B cell (primary cell): ENCODE measurements at regions of chr5 and their contacts with region 1.

Region 1: DNA sequence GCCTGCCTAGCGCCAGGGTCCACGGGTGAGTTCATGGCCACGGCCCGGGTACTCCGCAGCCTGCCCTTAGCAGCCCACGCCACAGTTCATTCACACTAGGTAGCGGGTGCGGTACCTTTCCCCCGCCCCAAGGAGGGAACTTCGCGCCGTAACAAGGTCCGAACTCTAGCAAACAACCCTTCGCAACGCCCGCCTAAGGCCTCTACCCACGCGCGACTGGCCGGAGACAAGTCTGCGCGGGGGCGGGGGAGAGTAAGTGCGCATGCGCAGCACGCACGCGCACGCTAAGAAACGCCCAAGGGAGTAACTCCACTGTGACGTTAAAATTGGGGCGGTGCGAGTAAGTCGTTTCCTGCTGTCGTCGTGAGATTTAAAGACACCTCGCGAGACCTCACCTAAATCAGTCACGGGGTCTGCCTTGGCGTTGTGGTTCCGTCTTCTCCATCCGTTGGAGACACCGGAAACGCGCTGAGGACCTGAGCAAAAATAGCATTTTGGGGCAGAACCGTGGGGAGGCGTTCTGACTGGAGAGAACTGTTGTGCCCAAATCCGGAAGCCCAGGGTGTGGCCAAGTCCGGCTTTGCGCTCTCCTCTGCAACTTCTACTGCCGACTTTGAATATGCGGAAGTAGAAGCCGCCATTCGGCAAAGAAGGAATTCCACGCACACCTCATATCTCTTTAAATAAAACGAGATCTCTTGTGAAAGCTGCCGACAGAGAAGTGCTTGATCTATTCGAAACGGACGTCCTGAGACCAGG is at the start of gene RAPGEF6:
- DNase-seq: peak; percentile 100
- ATAC-seq: peak; percentile 83
- H3K4me3 ChIP-seq: peak within 1 kb of the TSS; percentile 77 to 91 (median 86)
- H3K4me3 Mint-ChIP-seq: peak within 1 kb of the TSS; percentile 95
- H3K27ac ChIP-seq: peak within 1 kb of the TSS; percentile 91 to 99
- H3K27ac Mint-ChIP-seq: peak within 1 kb of the TSS; percentile 99
- H3K4me1 ChIP-seq: peaks cover 41 to 46% of the 10 kb centered on the region in 2 donors
- H3K4me1 Mint-ChIP-seq: peaks cover 40% of the 10 kb centered on the region
- H3K27me3 ChIP-seq: no peaks in the 10 kb centered on the region
- H3K27me3 Mint-ChIP-seq: no peaks in the 10 kb centered on the region
- CTCF ChIP-seq: no peak
- total RNA-seq, gene RAPGEF6: 48.7 and 56.2 TPM in 2 replicates

Region 2: GRCh38 chr5:131165119-131165727 is 470.0 kb before region 1 on chr5 and contains the start of gene HINT1:
- CTCF ChIA-PET with region 1: no interaction called
- POLR2A ChIA-PET with region 1: no interaction called
- intact Hi-C with region 1: loop called (anchors 10 kb)
- DNase-seq: peak; percentile 96
- ATAC-seq: peak; percentile 80
- H3K4me3 ChIP-seq: peak within 1 kb of the TSS; percentile 69 to 96 (median 94)
- H3K4me3 Mint-ChIP-seq: peak within 1 kb of the TSS; percentile 90
- H3K27ac ChIP-seq: peak within 1 kb of the TSS; percentile 82 to 92
- H3K27ac Mint-ChIP-seq: peak within 1 kb of the TSS; percentile 98
- H3K4me1 ChIP-seq: peaks cover 20 to 23% of the 10 kb centered on the region in 2 donors
- H3K4me1 Mint-ChIP-seq: peaks cover 41% of the 10 kb centered on the region
- H3K27me3 ChIP-seq: no peaks in the 10 kb centered on the region
- H3K27me3 Mint-ChIP-seq: no peaks in the 10 kb centered on the region
- CTCF ChIP-seq: no peak
- total RNA-seq, gene HINT1: 180 and 206 TPM in 2 replicates

Region 3: DNA sequence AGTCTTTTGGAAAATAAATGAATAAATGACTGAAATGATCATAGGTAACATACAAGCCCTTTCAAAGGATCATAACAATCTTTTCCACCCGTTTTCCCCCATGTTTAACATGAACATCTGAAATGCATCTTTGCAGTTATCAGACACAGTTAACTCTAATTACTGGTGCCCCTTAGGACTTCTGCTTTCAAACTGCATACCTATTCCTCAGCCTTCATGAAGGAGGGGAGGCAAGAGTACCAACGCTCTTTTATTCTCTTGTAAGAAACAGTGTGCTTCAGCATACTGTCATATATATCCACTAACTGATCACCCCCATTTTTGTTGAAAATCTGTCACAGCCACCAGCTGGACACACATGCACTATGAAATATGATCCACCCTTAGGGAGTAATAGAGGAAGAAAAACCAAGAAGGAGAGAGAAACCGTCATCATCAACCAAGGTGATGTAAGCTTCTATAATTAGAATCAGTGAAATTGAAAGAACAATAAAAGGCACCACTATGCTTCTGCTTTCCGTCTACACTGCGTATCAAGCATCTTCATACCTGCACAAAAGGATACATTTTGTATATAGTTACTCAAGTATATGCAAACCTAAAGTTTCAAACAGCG is 98.9 kb before region 1 on chr5:
- CTCF ChIA-PET with region 1: no interaction called
- POLR2A ChIA-PET with region 1: no interaction called
- intact Hi-C with region 1: loop called (anchors 1 kb)
- DNase-seq: peak; percentile 92
- ATAC-seq: peak; percentile 88
- H3K4me3 ChIP-seq: peak overlapping the region in 3 of 5 experiments; percentile 27 to 35 (median 35)
- H3K4me3 Mint-ChIP-seq: peak overlapping the region; percentile 60
- H3K27ac ChIP-seq: peak overlapping the region; percentile 82 to 96
- H3K27ac Mint-ChIP-seq: peak overlapping the region; percentile 87
- H3K4me1 ChIP-seq: peaks cover 18 to 19% of the 10 kb centered on the region in 2 donors
- H3K4me1 Mint-ChIP-seq: peaks cover 42% of the 10 kb centered on the region
- H3K27me3 ChIP-seq: no peaks in the 10 kb centered on the region
- H3K27me3 Mint-ChIP-seq: no peaks in the 10 kb centered on the region
- CTCF ChIP-seq: no peak

Region 4: GRCh38 chr5:131647048-131647769 is 12.0 kb after region 1 on chr5:
- CTCF ChIA-PET with region 1: interaction called, 13 read pairs
- POLR2A ChIA-PET with region 1: interaction called, 22 read pairs
- intact Hi-C with region 1: loop called (anchors 1 kb)
- DNase-seq: peak; percentile 75
- ATAC-seq: peak; percentile 88
- H3K4me3 ChIP-seq: peak overlapping the region; percentile 2 to 63 (median 45)
- H3K4me3 Mint-ChIP-seq: peak overlapping the region; percentile 67
- H3K27ac ChIP-seq: peak overlapping the region; percentile 55 to 70
- H3K27ac Mint-ChIP-seq: peak overlapping the region; percentile 94
- H3K4me1 ChIP-seq: peaks cover 16 to 22% of the 10 kb centered on the region in 2 donors
- H3K4me1 Mint-ChIP-seq: peaks cover 31% of the 10 kb centered on the region
- H3K27me3 ChIP-seq: no peaks in the 10 kb centered on the region
- H3K27me3 Mint-ChIP-seq: no peaks in the 10 kb centered on the region
- CTCF ChIP-seq: peak; percentile 50

Region 5: GRCh38 chr5:131796793-131797693 is 161.9 kb after region 1 on chr5 and contains the start of gene FNIP1:
- CTCF ChIA-PET with region 1: interaction called, 3 read pairs
- POLR2A ChIA-PET with region 1: interaction called, 10 read pairs
- intact Hi-C with region 1: loop called (anchors 1 kb)
- DNase-seq: peak; percentile 98
- ATAC-seq: peak; percentile 93
- H3K4me3 ChIP-seq: peak within 1 kb of the TSS; percentile 66 to 82 (median 76)
- H3K4me3 Mint-ChIP-seq: peak within 1 kb of the TSS; percentile 98
- H3K27ac ChIP-seq: peak within 1 kb of the TSS; percentile 82 to 100
- H3K27ac Mint-ChIP-seq: peak within 1 kb of the TSS; percentile 96
- H3K4me1 ChIP-seq: peaks cover 15 to 21% of the 10 kb centered on the region in 2 donors
- H3K4me1 Mint-ChIP-seq: peaks cover 40% of the 10 kb centered on the region
- H3K27me3 ChIP-seq: no peaks in the 10 kb centered on the region
- H3K27me3 Mint-ChIP-seq: no peaks in the 10 kb centered on the region
- CTCF ChIP-seq: no peak
- total RNA-seq, gene FNIP1: 52.8 and 57.8 TPM in 2 replicates